PC-9 (cell line): ENCODE measurements at regions of chr20 and their contacts with region 1.

Region 1: DNA sequence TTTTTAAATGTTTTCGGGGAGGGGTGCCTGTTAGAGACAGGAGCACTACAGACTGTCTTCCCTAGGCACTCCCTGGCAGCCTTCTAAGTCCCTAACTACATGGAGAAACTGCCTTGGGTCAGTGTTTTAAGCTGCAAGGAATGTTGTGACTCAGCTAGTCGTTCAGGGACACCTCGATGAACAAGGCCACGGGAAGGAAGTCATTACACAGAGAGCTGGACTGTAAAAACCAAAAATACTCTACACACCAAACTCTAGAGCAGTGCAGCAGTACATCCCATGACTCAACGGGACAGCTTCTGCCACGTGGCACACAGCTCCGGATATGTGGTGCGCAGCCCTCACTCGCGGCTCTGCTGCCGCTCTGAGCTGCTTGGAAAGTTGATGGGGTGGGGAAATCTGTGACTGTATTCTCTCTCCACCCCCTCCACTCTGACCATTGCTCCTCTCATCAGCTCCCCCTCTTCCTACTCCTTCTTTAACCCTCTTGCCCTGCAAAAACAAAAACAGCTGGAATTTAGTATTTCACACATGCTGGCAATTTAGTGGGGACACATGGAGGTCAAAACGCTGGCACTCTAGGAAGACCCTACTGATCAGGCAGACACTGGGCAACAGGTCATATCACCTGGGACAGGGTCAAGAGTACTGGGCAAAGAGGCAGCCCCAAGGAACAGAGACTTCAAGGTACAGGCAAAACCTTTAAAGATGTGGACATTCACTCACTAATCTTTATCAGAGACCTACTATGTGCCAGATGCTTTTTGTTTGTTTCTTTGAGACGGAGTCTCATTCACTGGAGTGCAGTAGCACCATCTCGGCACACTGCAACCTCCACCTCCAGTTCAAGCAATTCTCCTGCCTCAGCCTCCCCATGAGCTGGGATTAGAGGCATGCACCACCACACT is 10.9 kb upstream of the LPIN3 start:
- DNase-seq: peak; percentile 59 to 96
- H3K4me3 ChIP-seq: peak overlapping the region; percentile 27; the same call in 1 of the 2 replicates
- H3K27ac ChIP-seq: peak overlapping the region; percentile 81
- H3K4me1 ChIP-seq: peaks cover 20% of the 10 kb centered on the region
- H3K27me3 ChIP-seq: no peaks in the 10 kb centered on the region
- CTCF ChIP-seq: no peak

Region 2: GRCh38 chr20:41086402-41087338 is 243.0 kb before region 1 on chr20:
- CTCF ChIA-PET with region 1: no interaction called
- POLR2A ChIA-PET with region 1: no interaction called
- intact Hi-C with region 1: no loop called
- DNase-seq: peak in 1 of 2 experiments; percentile 87
- H3K4me3 ChIP-seq: peak overlapping the region; percentile 35; the same call in 1 of the 2 replicates
- H3K27ac ChIP-seq: peak overlapping the region; percentile 67
- H3K4me1 ChIP-seq: peaks cover 40% of the 10 kb centered on the region
- H3K27me3 ChIP-seq: no peaks in the 10 kb centered on the region
- CTCF ChIP-seq: no peak

Region 3: GRCh38 chr20:41218466-41218865 is 111.2 kb before region 1 on chr20:
- CTCF ChIA-PET with region 1: interaction called, 12 read pairs
- POLR2A ChIA-PET with region 1: no interaction called
- intact Hi-C with region 1: no loop called
- DNase-seq: peak in 1 of 2 experiments; percentile 26
- H3K4me3 ChIP-seq: no peak overlapping the region
- H3K27ac ChIP-seq: no peak overlapping the region
- H3K4me1 ChIP-seq: no peaks in the 10 kb centered on the region; the same call in 1 of the 2 replicates
- H3K27me3 ChIP-seq: no peaks in the 10 kb centered on the region
- CTCF ChIP-seq: no peak

Region 4: DNA sequence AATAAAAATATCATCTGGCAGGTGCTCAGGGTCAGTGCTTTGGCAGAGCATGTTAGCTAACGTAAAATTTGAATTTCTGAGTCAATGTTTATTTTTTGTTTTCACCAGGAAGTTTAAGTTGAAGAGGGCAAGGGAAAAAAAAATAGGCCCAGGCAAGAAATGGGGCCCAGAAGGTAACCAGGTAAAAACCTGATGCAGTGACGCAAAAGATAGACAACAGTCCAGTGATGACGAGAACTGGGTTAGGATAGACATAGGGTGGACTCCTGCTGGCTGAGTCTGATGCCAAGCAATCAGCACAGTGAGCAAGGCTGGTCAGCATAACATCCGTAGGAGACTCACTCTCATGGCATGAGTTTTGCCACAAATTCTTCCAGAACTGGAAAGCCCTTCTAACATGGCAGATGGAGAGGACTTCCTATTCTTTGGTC is 54.4 kb before region 1 on chr20:
- CTCF ChIA-PET with region 1: no interaction called
- POLR2A ChIA-PET with region 1: no interaction called
- intact Hi-C with region 1: no loop called
- DNase-seq: no peak
- H3K4me3 ChIP-seq: no peak overlapping the region
- H3K27ac ChIP-seq: no peak overlapping the region
- H3K4me1 ChIP-seq: no peaks in the 10 kb centered on the region
- H3K27me3 ChIP-seq: no peaks in the 10 kb centered on the region
- CTCF ChIP-seq: no peak

Region 5: GRCh38 chr20:41293269-41294037 is 36.2 kb before region 1 on chr20:
- CTCF ChIA-PET with region 1: no interaction called
- POLR2A ChIA-PET with region 1: no interaction called
- intact Hi-C with region 1: no loop called
- DNase-seq: no peak
- H3K4me3 ChIP-seq: no peak overlapping the region
- H3K27ac ChIP-seq: no peak overlapping the region
- H3K4me1 ChIP-seq: 0 out of 2 replicates have a peak, but pooled peaks cover 6% of the 10 kb centered on the region
- H3K27me3 ChIP-seq: no peaks in the 10 kb centered on the region
- CTCF ChIP-seq: no peak